ENCODE measurements at regions of chr15 and their contacts with region 1.

Region 1: DNA sequence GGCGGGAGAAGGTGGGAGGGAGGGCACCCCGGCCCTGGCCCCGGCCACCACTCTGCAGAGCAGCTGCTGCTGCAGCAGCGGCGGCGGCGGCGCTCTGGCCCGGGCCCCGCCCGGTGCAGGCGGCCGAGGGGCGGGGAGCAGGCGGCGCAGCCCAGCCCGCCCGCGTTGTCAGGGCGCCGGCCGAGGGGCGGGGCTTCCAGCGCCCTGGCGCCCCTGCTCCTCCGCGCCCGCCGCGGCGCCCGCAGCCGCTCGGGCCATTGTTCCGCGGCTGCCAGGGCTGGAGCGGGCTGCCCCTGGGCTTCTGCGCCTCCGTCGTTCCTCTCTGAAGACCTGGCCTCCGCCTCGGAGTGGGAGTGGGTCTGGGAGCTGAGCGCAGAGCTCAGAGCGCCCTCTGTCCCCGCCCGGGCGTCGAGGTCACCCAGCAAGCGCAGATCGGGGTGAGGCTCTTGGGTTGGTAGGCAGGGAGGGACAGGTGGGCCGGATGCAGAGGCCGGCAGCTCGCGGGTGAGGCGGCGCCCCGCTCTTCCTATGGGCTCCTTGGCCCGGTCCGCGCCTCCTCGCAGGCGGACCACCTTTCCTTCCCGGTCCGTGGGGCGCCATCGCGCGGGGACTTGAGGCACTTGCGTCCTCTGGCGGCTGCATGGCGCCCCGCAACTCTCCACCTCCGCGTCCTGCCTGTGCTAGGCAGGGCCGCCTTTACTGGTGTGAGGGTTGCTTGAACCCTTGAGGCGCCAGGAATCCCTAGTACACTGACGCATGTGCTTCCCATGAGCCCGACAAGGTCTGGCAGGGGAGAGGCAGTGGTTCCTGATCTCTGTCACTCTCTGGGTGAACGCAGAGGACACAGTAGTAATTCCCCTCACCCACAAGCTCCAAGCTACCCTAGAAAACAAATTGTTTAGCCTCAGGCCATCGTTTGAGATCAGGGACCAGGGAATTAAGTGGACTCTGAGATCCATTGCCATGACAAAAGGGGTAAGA is at the start of gene LPCAT4:
- DNase-seq: peak; percentile 94
- H3K4me3 ChIP-seq: peak within 1 kb of the TSS; percentile 72 to 95 (median 92)
- H3K27ac ChIP-seq: peak within 1 kb of the TSS; percentile 98 to 100 (median 99)
- H3K4me1 ChIP-seq: peaks cover 5 to 49% (median 36%) of the 10 kb centered on the region in 4 donors
- H3K27me3 ChIP-seq: no peaks in the 10 kb centered on the region
- CTCF ChIP-seq: peak; percentile 96 to 99 (median 97)
- EP300 ChIP-seq: no peak
- POLR2A ChIP-seq: peak; percentile 91
- total RNA-seq, gene LPCAT4: 109 to 380 (median 143) TPM

Region 2: GRCh38 chr15:34084086-34084485 is 283.3 kb before region 1 on chr15:
- in situ Hi-C with region 1: loop called in 2 of 4 experiments (anchors 25 kb)
- intact Hi-C with region 1: no loop called
- DNase-seq: peak; percentile 53
- H3K4me3 ChIP-seq: no peak overlapping the region
- H3K27ac ChIP-seq: peak overlapping the region in 1 of 4 donors; percentile 46
- H3K4me1 ChIP-seq: peaks cover 0 to 17% (median 0%) of the 10 kb centered on the region in 4 donors
- H3K27me3 ChIP-seq: no peaks in the 10 kb centered on the region
- CTCF ChIP-seq: no peak
- EP300 ChIP-seq: no peak
- POLR2A ChIP-seq: no peak

Region 3: DNA sequence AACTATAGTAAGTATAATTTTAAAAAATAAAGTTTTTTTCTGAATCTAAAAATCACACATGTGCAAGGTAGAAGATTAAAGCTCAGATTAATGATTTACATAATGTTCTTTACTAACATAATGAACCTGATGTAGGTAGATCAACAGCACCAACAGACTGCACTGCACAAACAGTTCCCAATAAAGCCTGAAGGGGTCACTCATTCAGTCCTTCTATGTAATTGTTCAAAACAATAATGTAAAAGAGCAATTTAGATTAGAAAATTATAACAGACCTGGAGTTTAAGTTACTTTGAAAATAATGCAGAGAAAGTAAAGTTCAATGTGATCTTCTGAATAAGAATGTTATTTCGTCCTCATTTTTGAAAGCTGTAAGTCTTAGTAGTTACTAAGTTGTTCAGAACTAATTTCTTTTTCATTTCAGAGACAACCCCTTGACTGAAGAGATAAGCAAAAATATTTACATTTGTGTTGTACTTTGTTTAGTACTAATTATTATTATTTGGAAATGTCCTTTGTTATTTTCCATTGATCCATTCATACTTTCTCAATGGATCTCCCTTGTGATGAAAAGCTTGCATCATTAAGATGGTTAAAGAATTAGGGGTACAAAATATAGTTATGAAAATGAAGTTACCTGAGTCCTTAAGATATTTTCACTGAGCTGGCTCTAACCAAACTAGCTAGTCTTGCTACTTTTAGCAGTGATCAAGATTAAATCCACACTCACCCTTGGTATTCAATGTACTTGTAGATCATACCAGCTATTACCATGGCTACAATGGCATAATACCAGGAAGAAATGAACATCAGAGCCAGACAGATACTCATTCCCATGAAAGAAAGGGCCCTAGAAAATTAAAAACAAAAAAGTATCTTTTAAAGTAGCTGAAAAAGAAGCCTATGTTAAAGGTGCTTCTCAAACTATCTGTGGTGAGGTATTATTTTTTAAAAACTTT is 125.7 kb before region 1 on chr15:
- in situ Hi-C with region 1: loop called in 2 of 4 experiments (anchors 10 to 25 kb)
- intact Hi-C with region 1: loop called (anchors 10 kb)
- DNase-seq: peak; percentile 18
- H3K4me3 ChIP-seq: no peak overlapping the region
- H3K27ac ChIP-seq: no peak overlapping the region
- H3K4me1 ChIP-seq: no peaks in the 10 kb centered on the region
- H3K27me3 ChIP-seq: no peaks in the 10 kb centered on the region
- CTCF ChIP-seq: peak; percentile 75 to 84 (median 76)
- EP300 ChIP-seq: no peak
- POLR2A ChIP-seq: no peak